Activated B cell treated with CpG ODN at 0.5 μM for 24 hours (primary cell): ENCODE measurements at regions of chr6 and their contacts with region 1.

Region 1: GRCh38 chr6:108782179-108783041 is 65.8 kb upstream of the ARMC2 start:
- DNase-seq: peak; percentile 52
- ATAC-seq: peak; percentile 94
- H3K4me3 Mint-ChIP-seq: peak overlapping the region; percentile 81
- H3K27ac Mint-ChIP-seq: no peak overlapping the region
- H3K4me1 Mint-ChIP-seq: peaks cover 29% of the 10 kb centered on the region
- H3K27me3 Mint-ChIP-seq: peaks cover 17% of the 10 kb centered on the region
- CTCF ChIP-seq: peak; percentile 27

Region 2: DNA sequence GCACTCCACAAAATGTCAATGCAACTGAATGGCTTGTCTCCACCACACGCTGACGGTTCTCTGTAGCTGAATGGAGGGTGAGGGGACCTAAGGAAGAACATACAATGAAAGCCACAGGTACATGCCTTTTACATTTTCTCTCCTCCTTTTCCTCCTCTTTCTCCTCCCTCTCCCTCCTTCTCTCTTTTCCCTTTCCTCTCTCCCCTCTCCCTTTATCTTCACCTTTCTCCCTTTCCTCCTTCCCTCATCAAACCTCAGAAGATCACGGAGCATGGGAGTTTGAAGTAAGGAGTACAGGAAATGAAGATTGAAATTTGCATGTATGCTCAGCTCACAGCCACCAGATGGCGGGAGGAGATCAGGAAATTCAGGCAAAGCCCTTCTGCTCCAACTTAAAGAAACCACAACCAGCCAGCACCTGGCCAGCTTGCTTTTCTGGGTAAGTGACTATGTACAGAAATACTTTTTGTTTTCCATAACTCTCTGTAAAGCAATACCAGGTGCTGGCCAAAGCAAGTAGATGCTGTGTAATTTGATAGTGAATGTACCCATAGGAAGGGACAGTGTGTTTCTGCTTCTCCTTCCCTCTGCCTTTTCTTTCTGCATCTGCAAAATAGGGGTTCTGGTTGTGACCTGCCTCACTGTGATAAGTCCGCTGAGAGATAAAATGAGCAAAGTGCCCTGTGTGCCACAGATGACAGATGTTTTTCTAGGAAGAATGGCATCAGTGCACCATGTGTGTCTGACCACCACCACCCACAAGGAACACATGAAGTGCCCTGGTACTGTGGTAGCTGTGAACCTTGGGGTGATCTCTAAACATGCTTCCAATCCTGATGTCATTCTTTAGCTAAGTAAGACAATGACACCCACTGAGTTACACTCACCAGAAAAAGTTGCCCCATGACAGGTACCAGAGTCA is 240.3 kb before region 1 on chr6:
- CTCF ChIA-PET with region 1: interaction called, 23 read pairs
- POLR2A ChIA-PET with region 1: no interaction called
- intact Hi-C with region 1: loop called (anchors 1 kb)
- DNase-seq: peak; percentile 34
- ATAC-seq: peak; percentile 84
- H3K4me3 Mint-ChIP-seq: peak overlapping the region; percentile 41
- H3K27ac Mint-ChIP-seq: no peak overlapping the region
- H3K4me1 Mint-ChIP-seq: peaks cover 15% of the 10 kb centered on the region
- H3K27me3 Mint-ChIP-seq: peaks cover 7% of the 10 kb centered on the region
- CTCF ChIP-seq: peak; percentile 39

Region 3: DNA sequence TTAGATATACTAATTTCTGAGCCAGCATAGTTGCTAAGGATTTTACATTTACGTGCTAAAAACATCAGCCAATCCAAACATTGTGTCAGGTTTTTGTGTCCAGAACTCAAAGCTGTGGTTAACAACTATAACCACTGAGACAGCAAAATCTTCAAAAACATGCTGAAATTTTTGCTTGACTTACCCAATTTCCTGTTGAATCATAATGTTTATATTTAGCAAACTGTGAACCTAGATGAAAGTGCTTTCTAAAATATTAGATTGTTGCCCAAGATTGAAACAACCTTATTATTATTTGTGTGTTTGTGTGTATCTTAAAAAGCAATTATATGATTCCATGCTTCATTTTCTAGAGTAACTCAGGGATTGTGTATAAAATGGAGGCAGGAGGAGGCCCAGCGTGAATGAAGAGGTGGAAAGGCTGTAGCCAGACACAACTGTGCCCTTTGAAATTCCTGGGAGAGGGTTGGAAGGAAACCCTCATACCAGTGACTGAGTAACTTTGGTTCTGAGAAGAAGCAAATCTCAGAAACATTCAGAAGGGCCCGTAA is 113.8 kb after region 1 on chr6:
- CTCF ChIA-PET with region 1: interaction called, 5 read pairs
- POLR2A ChIA-PET with region 1: no interaction called
- intact Hi-C with region 1: loop called (anchors 1 kb)
- DNase-seq: no peak
- ATAC-seq: no peak
- H3K4me3 Mint-ChIP-seq: no peak overlapping the region
- H3K27ac Mint-ChIP-seq: no peak overlapping the region
- H3K4me1 Mint-ChIP-seq: peaks cover 26% of the 10 kb centered on the region
- H3K27me3 Mint-ChIP-seq: no peaks in the 10 kb centered on the region
- CTCF ChIP-seq: no peak

Region 4: GRCh38 chr6:110020888-110021287 is 1238.5 kb after region 1 on chr6:
- CTCF ChIA-PET with region 1: no interaction called
- POLR2A ChIA-PET with region 1: no interaction called
- intact Hi-C with region 1: no loop called
- DNase-seq: no peak
- ATAC-seq: peak; percentile 50
- H3K4me3 Mint-ChIP-seq: peak overlapping the region; percentile 2
- H3K27ac Mint-ChIP-seq: peak overlapping the region; percentile 27
- H3K4me1 Mint-ChIP-seq: peaks cover 16% of the 10 kb centered on the region
- H3K27me3 Mint-ChIP-seq: peaks cover 8% of the 10 kb centered on the region
- CTCF ChIP-seq: no peak